ENCODE measurements at regions of chr6 and their contacts with region 1.

Region 1: DNA sequence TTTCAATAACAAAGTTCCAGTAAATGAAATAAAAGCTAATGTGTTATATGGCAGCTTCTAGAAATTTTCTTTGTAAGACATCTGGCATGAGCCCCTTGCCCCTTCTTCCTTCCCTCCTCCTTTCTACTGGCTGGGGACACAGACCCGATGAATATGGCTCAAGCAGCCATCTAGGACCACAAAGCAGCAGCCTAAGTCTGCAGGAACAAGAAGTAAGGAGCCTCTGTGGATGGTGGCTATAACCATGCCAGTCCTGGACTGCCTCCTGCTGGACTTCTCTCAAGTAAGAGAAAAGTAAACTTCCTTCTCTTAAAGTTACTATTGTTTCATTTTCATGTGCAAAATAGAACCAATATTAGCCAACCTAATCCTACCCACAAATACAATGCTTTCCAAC is 114.9 kb upstream of the DST start:
- DNase-seq: peak; percentile 69 to 83
- H3K4me3 ChIP-seq: no peak overlapping the region
- H3K27ac ChIP-seq: peak overlapping the region in 2 of 5 donors; percentile 25 to 62
- H3K4me1 ChIP-seq: peaks cover 12 to 50% (median 28%) of the 10 kb centered on the region in 4 donors
- H3K27me3 ChIP-seq: no peaks in the 10 kb centered on the region
- CTCF ChIP-seq: peak in 4 of 7 experiments; percentile 29 to 69 (median 54)
- EP300 ChIP-seq: no peak
- POLR2A ChIP-seq: no peak

Region 2: GRCh38 chr6:56708810-56709597 is 48.6 kb before region 1 on chr6:
- intact Hi-C with region 1: loop called (anchors 10 kb)
- DNase-seq: peak in 1 of 2 donors; percentile 70
- H3K4me3 ChIP-seq: no peak overlapping the region
- H3K27ac ChIP-seq: peak overlapping the region in 3 of 5 donors; percentile 7 to 43 (median 33)
- H3K4me1 ChIP-seq: peaks cover 7 to 35% (median 21%) of the 10 kb centered on the region in 4 donors
- H3K27me3 ChIP-seq: no peaks in the 10 kb centered on the region
- CTCF ChIP-seq: peak in 5 of 7 experiments; percentile 38 to 69 (median 63)
- EP300 ChIP-seq: no peak
- POLR2A ChIP-seq: no peak